ENCODE measurements at regions of chr18 and their contacts with region 1.

Region 1: GRCh38 chr18:77054606-77055428 is 77.8 kb downstream of the MBP start:
- DNase-seq: peak; percentile 75 to 85
- H3K4me3 ChIP-seq: no peak overlapping the region
- H3K4me3 Mint-ChIP-seq: peak overlapping the region; percentile 39
- H3K27ac Mint-ChIP-seq: peak overlapping the region; percentile 94
- H3K4me1 ChIP-seq: peaks cover 28% of the 10 kb centered on the region
- H3K4me1 Mint-ChIP-seq: peaks cover 11% of the 10 kb centered on the region
- H3K27me3 ChIP-seq: no peaks in the 10 kb centered on the region
- H3K27me3 Mint-ChIP-seq: no peaks in the 10 kb centered on the region
- CTCF ChIP-seq: peak; percentile 39 to 69

Region 2: DNA sequence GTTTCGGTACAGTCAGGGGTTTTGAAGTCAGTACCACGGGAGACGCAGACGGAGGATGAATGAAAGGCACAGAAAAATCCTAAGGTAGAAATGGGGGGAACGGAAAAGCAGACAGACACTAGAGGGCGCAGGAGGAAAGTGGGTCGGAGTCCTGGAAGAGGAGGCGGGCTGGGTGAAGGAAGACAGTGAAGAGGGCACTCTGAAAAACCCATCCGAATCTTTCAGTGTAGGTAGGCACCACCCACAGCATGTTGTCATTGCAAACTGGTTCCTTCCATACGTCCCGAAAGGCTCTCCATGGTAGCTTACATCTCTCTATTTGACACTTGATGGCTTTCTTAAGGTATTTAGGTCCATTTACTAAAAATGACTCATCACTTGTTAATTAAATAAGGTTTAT is 251.0 kb before region 1 on chr18:
- CTCF ChIA-PET with region 1: no interaction called
- POLR2A ChIA-PET with region 1: no interaction called
- intact Hi-C with region 1: loop called (anchors 1 kb)
- DNase-seq: peak; percentile 59 to 71
- H3K4me3 ChIP-seq: no peak overlapping the region
- H3K4me3 Mint-ChIP-seq: no peak overlapping the region
- H3K27ac Mint-ChIP-seq: no peak overlapping the region
- H3K4me1 ChIP-seq: no peaks in the 10 kb centered on the region
- H3K4me1 Mint-ChIP-seq: peaks cover 5% of the 10 kb centered on the region
- H3K27me3 ChIP-seq: no peaks in the 10 kb centered on the region
- H3K27me3 Mint-ChIP-seq: no peaks in the 10 kb centered on the region
- CTCF ChIP-seq: peak; percentile 33 to 75

Region 3: DNA sequence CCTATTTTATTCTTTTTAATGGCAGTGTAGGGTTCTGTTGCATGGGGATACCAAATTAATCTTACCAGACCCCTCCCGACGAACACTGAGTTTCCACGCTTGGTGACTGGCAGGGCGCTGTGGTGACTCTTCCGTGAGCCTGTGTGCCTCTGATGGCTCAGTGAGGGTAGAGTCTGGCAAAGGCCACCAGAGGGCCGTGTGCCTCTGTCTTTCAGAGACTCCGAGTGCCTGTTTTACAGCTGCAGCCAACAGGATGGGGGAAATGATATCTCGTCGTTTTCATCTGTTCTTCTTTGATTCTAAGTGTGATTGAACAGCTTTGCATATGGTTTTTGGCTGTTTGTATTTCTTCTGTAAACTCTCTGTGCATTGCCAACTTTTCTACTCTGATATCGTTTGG is 132.7 kb before region 1 on chr18:
- CTCF ChIA-PET with region 1: no interaction called
- POLR2A ChIA-PET with region 1: no interaction called
- intact Hi-C with region 1: loop called (anchors 1 kb)
- DNase-seq: peak in 1 of 2 experiments; percentile 23
- H3K4me3 ChIP-seq: no peak overlapping the region
- H3K4me3 Mint-ChIP-seq: no peak overlapping the region
- H3K27ac Mint-ChIP-seq: no peak overlapping the region
- H3K4me1 ChIP-seq: no peaks in the 10 kb centered on the region
- H3K4me1 Mint-ChIP-seq: no peaks in the 10 kb centered on the region
- H3K27me3 ChIP-seq: no peaks in the 10 kb centered on the region
- H3K27me3 Mint-ChIP-seq: no peaks in the 10 kb centered on the region
- CTCF ChIP-seq: peak in 1 of 2 experiments; percentile 40

Region 4: GRCh38 chr18:76953583-76954233 is 101.1 kb before region 1 on chr18:
- CTCF ChIA-PET with region 1: no interaction called
- POLR2A ChIA-PET with region 1: no interaction called
- intact Hi-C with region 1: no loop called
- DNase-seq: no peak
- H3K4me3 ChIP-seq: no peak overlapping the region
- H3K4me3 Mint-ChIP-seq: no peak overlapping the region
- H3K27ac Mint-ChIP-seq: no peak overlapping the region
- H3K4me1 ChIP-seq: no peaks in the 10 kb centered on the region
- H3K4me1 Mint-ChIP-seq: no peaks in the 10 kb centered on the region
- H3K27me3 ChIP-seq: no peaks in the 10 kb centered on the region
- H3K27me3 Mint-ChIP-seq: no peaks in the 10 kb centered on the region
- CTCF ChIP-seq: no peak

Region 5: DNA sequence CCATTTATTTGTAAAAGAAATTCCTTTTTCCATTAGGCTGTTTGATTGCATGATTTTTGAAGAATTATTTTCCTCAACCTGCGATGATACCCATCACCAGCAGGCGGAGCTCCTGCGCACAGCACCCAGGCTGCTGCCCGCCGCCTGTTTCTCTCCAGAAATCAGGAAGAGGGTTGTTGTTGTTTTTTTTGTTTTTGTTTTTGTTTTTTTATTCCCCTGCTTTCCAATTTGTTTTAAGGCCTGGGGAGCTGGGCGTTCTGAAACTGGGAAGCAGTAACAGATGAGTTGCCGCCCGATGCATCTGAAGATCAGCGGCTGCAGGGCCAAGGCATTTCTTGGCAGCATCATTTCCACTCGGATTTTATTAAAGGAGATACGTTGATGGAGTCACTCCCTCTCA is 54.3 kb before region 1 on chr18:
- CTCF ChIA-PET with region 1: interaction called, 8 read pairs
- POLR2A ChIA-PET with region 1: no interaction called
- intact Hi-C with region 1: loop called (anchors 1 kb)
- DNase-seq: peak in 1 of 2 experiments; percentile 35
- H3K4me3 ChIP-seq: no peak overlapping the region
- H3K4me3 Mint-ChIP-seq: no peak overlapping the region
- H3K27ac Mint-ChIP-seq: no peak overlapping the region
- H3K4me1 ChIP-seq: no peaks in the 10 kb centered on the region
- H3K4me1 Mint-ChIP-seq: no peaks in the 10 kb centered on the region
- H3K27me3 ChIP-seq: no peaks in the 10 kb centered on the region
- H3K27me3 Mint-ChIP-seq: no peaks in the 10 kb centered on the region
- CTCF ChIP-seq: peak; percentile 68 to 70

Region 6: GRCh38 chr18:77079954-77080682 is 25.3 kb after region 1 on chr18:
- CTCF ChIA-PET with region 1: no interaction called
- POLR2A ChIA-PET with region 1: no interaction called
- intact Hi-C with region 1: no loop called
- DNase-seq: no peak
- H3K4me3 ChIP-seq: no peak overlapping the region
- H3K4me3 Mint-ChIP-seq: no peak overlapping the region
- H3K27ac Mint-ChIP-seq: no peak overlapping the region
- H3K4me1 ChIP-seq: no peaks in the 10 kb centered on the region
- H3K4me1 Mint-ChIP-seq: peaks cover 8% of the 10 kb centered on the region
- H3K27me3 ChIP-seq: no peaks in the 10 kb centered on the region
- H3K27me3 Mint-ChIP-seq: no peaks in the 10 kb centered on the region
- CTCF ChIP-seq: no peak

Region 7: GRCh38 chr18:77207540-77207939 is 152.7 kb after region 1 on chr18:
- CTCF ChIA-PET with region 1: interaction called, 3 read pairs
- POLR2A ChIA-PET with region 1: no interaction called
- intact Hi-C with region 1: loop called (anchors 2 kb)
- DNase-seq: peak in 1 of 2 experiments; percentile 5
- H3K4me3 ChIP-seq: no peak overlapping the region
- H3K4me3 Mint-ChIP-seq: no peak overlapping the region
- H3K27ac Mint-ChIP-seq: no peak overlapping the region
- H3K4me1 ChIP-seq: no peaks in the 10 kb centered on the region
- H3K4me1 Mint-ChIP-seq: no peaks in the 10 kb centered on the region
- H3K27me3 ChIP-seq: no peaks in the 10 kb centered on the region
- H3K27me3 Mint-ChIP-seq: peaks cover 5% of the 10 kb centered on the region
- CTCF ChIP-seq: peak in 1 of 2 experiments; percentile 34